ENCODE measurements at regions of chr4 and their contacts with region 1.

Region 1: GRCh38 chr4:38620790-38621684 is 43.0 kb upstream of the KLF3 start:
- DNase-seq: peak; percentile 95
- H3K4me3 ChIP-seq: no peak overlapping the region
- H3K27ac ChIP-seq: peak overlapping the region; percentile 25
- H3K4me1 ChIP-seq: peaks cover 15% of the 10 kb centered on the region
- H3K27me3 ChIP-seq: no peaks in the 10 kb centered on the region
- CTCF ChIP-seq: no peak

Region 2: DNA sequence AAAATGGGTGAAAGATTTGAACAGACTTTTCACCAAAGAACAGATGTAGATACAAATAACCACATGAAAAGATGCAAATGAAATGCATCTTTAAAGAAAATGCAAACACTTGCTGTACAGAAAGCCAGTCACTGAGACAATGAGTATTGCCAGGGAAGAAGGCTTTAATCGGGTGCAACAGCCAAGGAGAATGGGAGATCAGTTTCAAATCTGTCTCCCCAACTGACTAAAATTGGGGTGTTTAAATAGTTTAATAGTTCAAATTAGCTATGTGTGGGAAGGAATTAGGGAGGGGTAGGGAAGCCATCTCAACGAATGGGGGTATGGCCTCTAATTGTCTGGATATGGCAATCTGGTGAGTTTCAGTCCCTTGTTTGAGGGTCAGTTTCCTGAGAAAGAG is 365.5 kb before region 1 on chr4:
- CTCF ChIA-PET with region 1: interaction called, 25 read pairs
- dilution Hi-C with region 1: no loop called
- in situ Hi-C with region 1: no loop called
- intact Hi-C with region 1: no loop called
- DNase-seq: no peak
- H3K4me3 ChIP-seq: no peak overlapping the region
- H3K27ac ChIP-seq: no peak overlapping the region
- H3K4me1 ChIP-seq: no peaks in the 10 kb centered on the region
- H3K27me3 ChIP-seq: no peaks in the 10 kb centered on the region
- CTCF ChIP-seq: no peak

Measured in mammary epithelial cell (primary cell).